CD8-positive, alpha-beta T cell (primary cell): ENCODE measurements at regions of chr10 and their contacts with region 1.

Region 1: DNA sequence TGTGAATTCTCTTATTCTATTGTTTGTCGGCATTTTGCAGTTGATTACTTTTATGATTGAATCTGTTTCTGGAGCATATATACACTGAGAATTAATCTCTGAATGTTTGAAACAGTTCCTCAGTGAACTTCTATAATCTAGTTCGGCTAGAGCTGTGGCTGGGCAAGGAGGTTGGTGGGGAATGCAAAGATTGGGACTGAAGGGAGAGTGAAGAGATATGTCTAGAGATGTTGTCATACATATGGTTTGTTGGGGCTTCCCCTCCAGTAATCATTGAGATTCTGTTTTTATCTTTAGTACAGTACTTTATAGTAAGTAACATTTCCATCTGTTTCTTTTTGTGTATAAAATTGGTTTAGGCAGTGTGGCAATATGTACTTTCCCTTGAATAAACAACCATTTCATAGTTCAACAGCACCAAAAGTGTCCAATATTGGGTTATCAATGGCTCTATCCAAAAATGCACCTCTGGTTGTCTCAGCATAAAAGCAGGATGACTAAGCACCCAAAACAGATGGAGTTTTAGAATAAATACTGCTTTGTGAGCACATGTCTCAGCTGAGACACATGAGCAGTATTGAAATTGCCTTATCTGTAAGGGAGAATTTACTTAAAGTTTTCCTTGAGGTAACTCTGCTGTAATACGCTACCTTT is 36.7 kb downstream of the WAC start:
- DNase-seq: no peak
- ATAC-seq: no peak
- H3K4me3 ChIP-seq: no peak overlapping the region
- H3K4me3 Mint-ChIP-seq: peak overlapping the region; percentile 6
- H3K27ac ChIP-seq: no peak overlapping the region
- H3K27ac Mint-ChIP-seq: peak overlapping the region; percentile 29
- H3K4me1 ChIP-seq: peaks cover 64% of the 10 kb centered on the region
- H3K4me1 Mint-ChIP-seq: peaks cover 87% of the 10 kb centered on the region
- H3K27me3 ChIP-seq: no peaks in the 10 kb centered on the region
- H3K27me3 Mint-ChIP-seq: no peaks in the 10 kb centered on the region
- CTCF ChIP-seq: no peak

Region 2: GRCh38 chr10:28445516-28445915 is 124.1 kb before region 1 on chr10:
- CTCF ChIA-PET with region 1: no interaction called
- POLR2A ChIA-PET with region 1: no interaction called
- intact Hi-C with region 1: no loop called
- DNase-seq: no peak
- ATAC-seq: no peak
- H3K4me3 ChIP-seq: no peak overlapping the region
- H3K4me3 Mint-ChIP-seq: no peak overlapping the region
- H3K27ac ChIP-seq: no peak overlapping the region
- H3K27ac Mint-ChIP-seq: no peak overlapping the region
- H3K4me1 ChIP-seq: no peaks in the 10 kb centered on the region
- H3K4me1 Mint-ChIP-seq: no peaks in the 10 kb centered on the region
- H3K27me3 ChIP-seq: peaks cover 0 to 2% of the 10 kb centered on the region in 2 experiments
- H3K27me3 Mint-ChIP-seq: peaks cover 14% of the 10 kb centered on the region
- CTCF ChIP-seq: no peak

Region 3: DNA sequence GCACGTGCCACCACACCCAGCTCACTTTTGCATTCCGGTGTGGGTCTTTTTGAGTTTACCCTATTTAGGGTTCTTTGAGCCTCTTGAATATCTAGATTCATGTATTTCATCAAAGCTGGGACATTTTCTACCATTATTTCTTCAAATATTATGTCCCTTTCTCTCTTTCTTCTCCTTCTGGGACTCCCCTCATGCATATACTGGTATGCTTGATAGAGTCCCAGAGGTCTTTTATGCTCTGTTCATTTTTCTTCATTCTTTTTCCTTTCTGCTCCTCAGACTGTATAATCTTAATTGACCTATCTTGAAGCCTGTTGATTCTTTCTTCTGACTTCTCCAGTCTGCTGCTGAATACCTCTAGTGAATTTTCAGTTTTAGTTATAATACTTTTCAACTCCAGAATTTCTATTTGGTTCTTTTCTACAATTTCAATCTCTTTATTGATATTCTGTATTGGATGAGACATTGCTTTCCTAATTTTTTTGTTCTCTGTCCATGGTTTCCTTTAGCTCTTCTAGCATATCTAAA is 45.8 kb before region 1 on chr10:
- CTCF ChIA-PET with region 1: no interaction called
- POLR2A ChIA-PET with region 1: no interaction called
- intact Hi-C with region 1: no loop called
- DNase-seq: no peak
- ATAC-seq: no peak
- H3K4me3 ChIP-seq: no peak overlapping the region
- H3K4me3 Mint-ChIP-seq: no peak overlapping the region
- H3K27ac ChIP-seq: no peak overlapping the region
- H3K27ac Mint-ChIP-seq: no peak overlapping the region
- H3K4me1 ChIP-seq: no peaks in the 10 kb centered on the region
- H3K4me1 Mint-ChIP-seq: peaks cover 10% of the 10 kb centered on the region
- H3K27me3 ChIP-seq: no peaks in the 10 kb centered on the region
- H3K27me3 Mint-ChIP-seq: no peaks in the 10 kb centered on the region
- CTCF ChIP-seq: no peak

Region 4: DNA sequence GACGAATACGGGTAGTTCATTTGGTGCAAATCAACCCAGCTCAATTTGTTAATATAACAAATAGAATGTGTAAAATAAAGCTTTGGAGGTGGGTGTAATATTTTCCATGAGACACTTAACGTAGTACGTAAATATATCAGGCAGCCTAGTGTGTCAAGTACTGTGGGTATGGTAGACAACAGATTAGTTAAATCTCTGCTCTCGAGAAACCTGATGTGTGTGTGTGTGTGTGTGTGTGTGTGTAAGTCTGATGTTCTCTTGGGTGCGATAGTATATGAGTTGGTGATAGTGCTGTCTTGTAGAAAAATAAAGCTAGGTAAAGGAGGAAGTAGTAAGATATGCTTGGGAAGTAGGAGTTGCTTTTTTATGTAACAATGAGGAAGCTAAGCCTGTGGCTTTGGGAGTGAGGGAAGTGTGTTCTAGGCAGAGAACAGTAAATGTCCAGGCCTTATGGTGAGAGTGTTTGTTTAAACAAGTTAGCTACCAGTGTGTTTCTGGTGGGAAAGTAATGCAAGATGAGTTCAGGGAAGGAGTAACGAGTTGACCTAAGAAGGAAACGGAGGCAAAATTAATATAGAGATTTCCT is 10.6 kb before region 1 on chr10:
- CTCF ChIA-PET with region 1: no interaction called
- POLR2A ChIA-PET with region 1: interaction called, 3 read pairs
- intact Hi-C with region 1: loop called in 1 of 2 experiments (anchors 1 kb)
- DNase-seq: no peak
- ATAC-seq: no peak
- H3K4me3 ChIP-seq: no peak overlapping the region
- H3K4me3 Mint-ChIP-seq: no peak overlapping the region
- H3K27ac ChIP-seq: no peak overlapping the region
- H3K27ac Mint-ChIP-seq: no peak overlapping the region
- H3K4me1 ChIP-seq: peaks cover 71% of the 10 kb centered on the region
- H3K4me1 Mint-ChIP-seq: peaks cover 84% of the 10 kb centered on the region
- H3K27me3 ChIP-seq: no peaks in the 10 kb centered on the region
- H3K27me3 Mint-ChIP-seq: no peaks in the 10 kb centered on the region
- CTCF ChIP-seq: no peak